CD8-positive, alpha-beta T cell (primary cell): ENCODE measurements at regions of chr10 and their contacts with region 1.

Region 1: DNA sequence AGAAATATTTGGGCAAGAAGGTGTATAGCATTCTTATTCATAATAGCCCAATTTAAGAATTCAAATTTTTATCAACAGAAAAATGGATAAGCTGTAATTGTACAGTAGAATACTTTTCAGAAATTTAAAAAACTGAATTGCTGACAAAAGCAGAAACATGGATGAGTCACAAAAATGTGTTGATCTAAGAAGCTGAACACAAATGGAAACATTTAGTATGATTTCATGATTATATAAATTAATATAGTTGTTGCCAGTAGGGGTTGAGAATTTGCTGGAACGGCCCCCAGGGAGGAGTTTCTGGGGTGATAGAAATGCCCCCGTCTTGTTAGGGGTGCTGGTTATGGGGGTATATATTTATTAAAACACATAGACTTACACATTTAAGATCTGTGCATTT is 179.1 kb downstream of the KLF6 start:
- DNase-seq: no peak
- ATAC-seq: no peak
- H3K4me3 ChIP-seq: no peak overlapping the region
- H3K4me3 Mint-ChIP-seq: no peak overlapping the region
- H3K27ac ChIP-seq: no peak overlapping the region
- H3K27ac Mint-ChIP-seq: no peak overlapping the region
- H3K4me1 ChIP-seq: no peaks in the 10 kb centered on the region
- H3K4me1 Mint-ChIP-seq: no peaks in the 10 kb centered on the region
- H3K27me3 ChIP-seq: no peaks in the 10 kb centered on the region
- H3K27me3 Mint-ChIP-seq: no peaks in the 10 kb centered on the region
- CTCF ChIP-seq: no peak

Region 2: GRCh38 chr10:3655528-3655927 is 49.6 kb after region 1 on chr10:
- CTCF ChIA-PET with region 1: no interaction called
- POLR2A ChIA-PET with region 1: no interaction called
- intact Hi-C with region 1: loop called in 1 of 2 experiments (anchors 2 kb)
- DNase-seq: no peak
- ATAC-seq: peak; percentile 40
- H3K4me3 ChIP-seq: no peak overlapping the region
- H3K4me3 Mint-ChIP-seq: no peak overlapping the region
- H3K27ac ChIP-seq: no peak overlapping the region
- H3K27ac Mint-ChIP-seq: no peak overlapping the region
- H3K4me1 ChIP-seq: peaks cover 4% of the 10 kb centered on the region
- H3K4me1 Mint-ChIP-seq: peaks cover 20% of the 10 kb centered on the region
- H3K27me3 ChIP-seq: no peaks in the 10 kb centered on the region
- H3K27me3 Mint-ChIP-seq: peaks cover 25% of the 10 kb centered on the region
- CTCF ChIP-seq: no peak